HEK293 (cell line): ENCODE measurements at regions of chr6 and their contacts with region 1.

Region 1: GRCh38 chr6:112180095-112180820 is 74.1 kb downstream of the LAMA4 start:
- H3K4me3 ChIP-seq: no peak overlapping the region
- H3K27ac ChIP-seq: no peak overlapping the region
- H3K4me1 ChIP-seq: peaks cover 9% of the 10 kb centered on the region
- CTCF ChIP-seq: peak; percentile 54; the same call in 1 of the 2 replicates

Region 2: DNA sequence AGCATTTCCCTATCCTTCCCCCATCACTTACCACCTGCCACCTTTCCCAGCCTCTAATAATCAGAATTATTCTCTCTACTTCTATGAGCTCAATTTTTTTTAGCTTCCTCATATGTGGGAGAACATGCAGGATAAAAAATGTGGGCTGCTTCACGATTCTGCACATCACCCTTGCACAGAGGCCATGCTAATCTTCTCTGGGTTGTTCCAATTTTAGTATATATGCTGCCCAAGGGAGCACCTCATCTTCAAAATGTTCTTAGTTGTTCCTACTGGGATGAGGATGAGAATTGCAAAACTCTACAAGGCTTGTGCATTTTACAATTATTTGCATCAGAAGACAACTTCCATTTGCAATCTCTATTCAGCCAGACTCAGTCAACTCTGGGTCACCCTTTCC is 16.0 kb after region 1 on chr6:
- CTCF ChIA-PET with region 1: interaction called, 16 read pairs
- POLR2A ChIA-PET with region 1: no interaction called
- H3K4me3 ChIP-seq: no peak overlapping the region
- H3K27ac ChIP-seq: no peak overlapping the region
- H3K4me1 ChIP-seq: 0 out of 2 replicates have a peak, but pooled peaks cover 2% of the 10 kb centered on the region
- CTCF ChIP-seq: no peak

Region 3: GRCh38 chr6:112237595-112237994 is 57.3 kb after region 1 on chr6:
- CTCF ChIA-PET with region 1: interaction called, 15 read pairs
- POLR2A ChIA-PET with region 1: no interaction called
- H3K4me3 ChIP-seq: no peak overlapping the region
- H3K27ac ChIP-seq: no peak overlapping the region
- H3K4me1 ChIP-seq: peaks cover 30% of the 10 kb centered on the region
- CTCF ChIP-seq: no peak

Region 4: GRCh38 chr6:112269114-112269513 is 88.9 kb after region 1 on chr6:
- CTCF ChIA-PET with region 1: interaction called, 58 read pairs
- POLR2A ChIA-PET with region 1: no interaction called
- H3K4me3 ChIP-seq: no peak overlapping the region
- H3K27ac ChIP-seq: no peak overlapping the region
- H3K4me1 ChIP-seq: no peaks in the 10 kb centered on the region
- CTCF ChIP-seq: peak; percentile 33; the same call in 1 of the 2 replicates

Region 5: GRCh38 chr6:112296122-112296521 is 115.9 kb after region 1 on chr6:
- CTCF ChIA-PET with region 1: interaction called, 56 read pairs
- POLR2A ChIA-PET with region 1: interaction called, 3 read pairs
- H3K4me3 ChIP-seq: no peak overlapping the region
- H3K27ac ChIP-seq: no peak overlapping the region
- H3K4me1 ChIP-seq: peaks cover 7% of the 10 kb centered on the region; the same call in 1 of the 2 replicates
- CTCF ChIP-seq: peak; percentile 61; the same call in 1 of the 2 replicates

Region 6: DNA sequence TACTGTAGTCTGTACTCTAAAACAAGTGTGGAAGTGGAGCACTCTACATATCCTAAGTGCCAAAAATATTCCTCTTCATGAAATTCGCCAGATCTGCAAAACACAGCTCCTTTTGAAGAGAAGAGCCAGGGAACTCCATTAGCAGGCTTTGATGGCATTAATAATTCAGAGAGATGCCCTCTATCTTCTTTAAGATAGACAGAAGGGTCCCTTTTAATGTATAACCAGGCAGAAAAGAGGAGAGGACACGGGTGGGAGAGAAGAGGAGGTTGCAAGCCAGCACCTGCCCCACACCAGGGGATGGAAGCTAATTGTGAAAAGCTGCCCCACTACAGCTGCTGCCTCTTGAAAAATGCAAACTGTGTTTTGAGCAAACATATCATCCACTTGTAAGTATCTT is 163.1 kb after region 1 on chr6:
- CTCF ChIA-PET with region 1: no interaction called
- POLR2A ChIA-PET with region 1: no interaction called
- H3K4me3 ChIP-seq: no peak overlapping the region
- H3K27ac ChIP-seq: no peak overlapping the region
- H3K4me1 ChIP-seq: no peaks in the 10 kb centered on the region
- CTCF ChIP-seq: no peak

Region 7: GRCh38 chr6:112372226-112372806 is 192.1 kb after region 1 on chr6:
- CTCF ChIA-PET with region 1: interaction called, 30 read pairs
- POLR2A ChIA-PET with region 1: no interaction called
- H3K4me3 ChIP-seq: no peak overlapping the region
- H3K27ac ChIP-seq: no peak overlapping the region
- H3K4me1 ChIP-seq: no peaks in the 10 kb centered on the region
- CTCF ChIP-seq: no peak